CD8-positive, alpha-beta T cell (primary cell): ENCODE measurements at regions of chr13 and their contacts with region 1.

Region 1: GRCh38 chr13:27449936-27450828 is at the start of gene MTIF3:
- DNase-seq: peak; percentile 94 to 99 (median 98)
- ATAC-seq: peak; percentile 81
- H3K4me3 ChIP-seq: peak within 1 kb of the TSS; percentile 82 to 92
- H3K4me3 Mint-ChIP-seq: peak within 1 kb of the TSS; percentile 93
- H3K27ac ChIP-seq: peak within 1 kb of the TSS; percentile 90 to 97
- H3K27ac Mint-ChIP-seq: peak within 1 kb of the TSS; percentile 99
- H3K4me1 ChIP-seq: peaks cover 54% of the 10 kb centered on the region
- H3K4me1 Mint-ChIP-seq: peaks cover 57% of the 10 kb centered on the region
- H3K27me3 ChIP-seq: no peaks in the 10 kb centered on the region
- H3K27me3 Mint-ChIP-seq: no peaks in the 10 kb centered on the region
- CTCF ChIP-seq: no peak
- total RNA-seq, gene MTIF3: 12.7 to 13.0 TPM

Region 2: GRCh38 chr13:26221721-26222519 is 1228.3 kb before region 1 on chr13 and contains the start of gene RNF6:
- CTCF ChIA-PET with region 1: no interaction called
- POLR2A ChIA-PET with region 1: no interaction called
- intact Hi-C with region 1: loop called in 1 of 2 experiments (anchors 10 kb)
- DNase-seq: peak; percentile 73 to 97 (median 86)
- ATAC-seq: peak; percentile 92
- H3K4me3 ChIP-seq: peak within 1 kb of the TSS; percentile 97 to 99
- H3K4me3 Mint-ChIP-seq: peak within 1 kb of the TSS; percentile 99
- H3K27ac ChIP-seq: peak within 1 kb of the TSS; percentile 90 to 98
- H3K27ac Mint-ChIP-seq: peak within 1 kb of the TSS; percentile 100
- H3K4me1 ChIP-seq: peaks cover 26% of the 10 kb centered on the region
- H3K4me1 Mint-ChIP-seq: peaks cover 45% of the 10 kb centered on the region
- H3K27me3 ChIP-seq: no peaks in the 10 kb centered on the region
- H3K27me3 Mint-ChIP-seq: no peaks in the 10 kb centered on the region
- CTCF ChIP-seq: no peak
- total RNA-seq, gene RNF6: 50.3 to 55.0 TPM

Region 3: DNA sequence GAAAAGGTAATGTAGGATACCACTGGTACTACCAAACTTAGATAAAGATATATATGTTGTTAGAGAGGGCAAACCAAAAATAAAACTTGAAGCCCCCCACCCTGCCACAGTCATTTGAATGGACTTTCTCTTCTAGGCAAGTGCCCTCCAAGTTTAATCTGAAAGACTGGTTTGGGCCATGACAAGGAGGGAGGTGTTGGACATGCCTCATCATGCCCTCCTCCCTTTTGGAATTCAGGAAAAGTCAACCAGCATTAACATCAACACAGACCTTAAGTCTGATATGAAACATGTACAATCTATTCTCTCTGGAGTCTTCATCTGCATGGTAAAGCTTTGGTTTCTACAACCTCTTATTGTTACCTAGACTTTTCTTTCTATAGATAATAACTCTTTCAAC is 643.3 kb before region 1 on chr13:
- CTCF ChIA-PET with region 1: no interaction called
- POLR2A ChIA-PET with region 1: no interaction called
- intact Hi-C with region 1: no loop called
- DNase-seq: no peak
- ATAC-seq: no peak
- H3K4me3 ChIP-seq: no peak overlapping the region
- H3K4me3 Mint-ChIP-seq: no peak overlapping the region
- H3K27ac ChIP-seq: no peak overlapping the region
- H3K27ac Mint-ChIP-seq: no peak overlapping the region
- H3K4me1 ChIP-seq: no peaks in the 10 kb centered on the region
- H3K4me1 Mint-ChIP-seq: no peaks in the 10 kb centered on the region
- H3K27me3 ChIP-seq: no peaks in the 10 kb centered on the region
- H3K27me3 Mint-ChIP-seq: peaks cover 44% of the 10 kb centered on the region
- CTCF ChIP-seq: no peak

Region 4: GRCh38 chr13:27406178-27406939 is 43.8 kb before region 1 on chr13:
- CTCF ChIA-PET with region 1: interaction called, 5 read pairs
- POLR2A ChIA-PET with region 1: no interaction called
- intact Hi-C with region 1: loop called (anchors 1 to 5 kb)
- DNase-seq: peak in 7 of 9 experiments; percentile 18 to 77 (median 44)
- ATAC-seq: peak; percentile 56
- H3K4me3 ChIP-seq: no peak overlapping the region
- H3K4me3 Mint-ChIP-seq: no peak overlapping the region
- H3K27ac ChIP-seq: no peak overlapping the region
- H3K27ac Mint-ChIP-seq: no peak overlapping the region
- H3K4me1 ChIP-seq: no peaks in the 10 kb centered on the region
- H3K4me1 Mint-ChIP-seq: peaks cover 4% of the 10 kb centered on the region
- H3K27me3 ChIP-seq: no peaks in the 10 kb centered on the region
- H3K27me3 Mint-ChIP-seq: no peaks in the 10 kb centered on the region
- CTCF ChIP-seq: peak; percentile 54

Region 5: DNA sequence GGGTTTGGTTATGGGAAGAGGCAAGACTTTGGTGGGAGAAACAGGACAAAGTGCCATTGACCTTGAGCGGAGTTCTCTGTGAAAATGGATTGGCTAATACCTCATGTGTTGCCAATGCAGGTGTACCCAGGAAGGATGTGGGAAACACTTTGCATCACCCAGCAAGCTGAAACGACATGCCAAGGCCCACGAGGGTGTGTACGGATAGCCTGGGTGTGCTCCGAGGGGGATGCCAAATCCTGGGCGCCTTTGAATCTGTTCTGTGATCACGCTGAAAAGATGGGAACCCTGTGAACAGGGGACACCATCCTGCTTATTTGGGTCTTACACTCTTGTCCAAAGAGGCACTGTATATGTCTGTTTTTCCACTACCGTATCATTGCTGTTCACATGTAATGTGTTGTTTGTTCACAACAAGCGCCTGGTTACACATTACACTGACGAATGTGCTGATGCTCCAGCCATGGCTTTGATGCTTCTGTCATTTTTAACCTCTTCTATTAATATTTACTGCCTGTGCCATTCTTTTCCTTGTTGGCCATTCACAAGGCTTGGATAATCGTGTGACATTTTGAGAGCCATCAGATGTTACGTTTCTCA is 17.5 kb before region 1 on chr13:
- CTCF ChIA-PET with region 1: interaction called, 62 read pairs
- POLR2A ChIA-PET with region 1: interaction called, 171 read pairs
- intact Hi-C with region 1: loop called in 1 of 2 experiments (anchors 1 kb)
- DNase-seq: peak in 4 of 9 experiments; percentile 53 to 72 (median 60)
- ATAC-seq: peak; percentile 80
- H3K4me3 ChIP-seq: no peak overlapping the region
- H3K4me3 Mint-ChIP-seq: peak overlapping the region; percentile 33
- H3K27ac ChIP-seq: peak overlapping the region; percentile 27 to 57
- H3K27ac Mint-ChIP-seq: peak overlapping the region; percentile 90
- H3K4me1 ChIP-seq: peaks cover 41% of the 10 kb centered on the region
- H3K4me1 Mint-ChIP-seq: peaks cover 54% of the 10 kb centered on the region
- H3K27me3 ChIP-seq: no peaks in the 10 kb centered on the region
- H3K27me3 Mint-ChIP-seq: no peaks in the 10 kb centered on the region
- CTCF ChIP-seq: no peak

Region 6: DNA sequence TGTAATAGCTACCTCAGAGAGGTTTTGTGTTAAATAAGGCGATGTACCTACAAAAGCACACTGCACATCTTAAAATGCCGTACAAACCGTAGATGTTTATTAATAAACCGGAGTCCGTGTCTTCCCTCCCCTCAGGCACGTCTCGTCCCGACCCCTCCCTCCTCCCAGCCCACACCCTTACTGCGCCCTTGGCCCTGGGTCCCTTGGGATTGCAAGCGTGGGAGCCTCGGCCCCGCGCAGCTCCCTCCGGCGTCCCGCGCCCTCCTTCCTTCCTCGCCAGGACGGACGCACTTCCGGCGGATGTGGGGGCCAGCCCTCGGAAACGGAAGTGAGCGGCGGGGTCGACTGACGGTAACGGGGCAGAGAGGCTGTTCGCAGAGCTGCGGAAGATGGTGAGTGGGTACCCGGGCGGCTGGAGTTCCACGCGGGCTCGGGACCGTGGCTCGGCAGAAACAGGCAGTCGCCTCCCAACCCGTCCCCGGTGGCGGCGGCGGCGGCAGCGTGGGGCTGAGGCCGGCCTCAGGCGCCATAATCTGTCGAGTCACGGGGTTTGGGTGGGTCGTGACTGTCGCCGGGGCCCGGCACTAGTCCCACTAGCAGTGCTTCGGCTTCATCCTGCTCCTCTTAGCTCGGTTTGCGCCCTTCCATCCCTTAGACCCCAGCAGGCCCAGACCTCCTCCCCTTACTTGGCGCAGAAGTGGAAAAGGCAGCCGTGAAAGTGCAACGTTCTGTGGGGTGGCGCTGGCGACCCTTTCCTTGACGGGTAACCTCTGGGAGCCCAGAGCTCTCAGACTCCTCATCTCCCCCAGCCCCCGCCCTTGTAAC is 1208.8 kb after region 1 on chr13 and contains the start of gene POMP:
- CTCF ChIA-PET with region 1: no interaction called
- POLR2A ChIA-PET with region 1: no interaction called
- intact Hi-C with region 1: loop called (anchors 2 kb)
- DNase-seq: peak; percentile 79 to 95 (median 93)
- ATAC-seq: peak; percentile 77
- H3K4me3 ChIP-seq: peak within 1 kb of the TSS; percentile 72 to 73
- H3K4me3 Mint-ChIP-seq: peak within 1 kb of the TSS; percentile 98
- H3K27ac ChIP-seq: peak within 1 kb of the TSS; percentile 85 to 97
- H3K27ac Mint-ChIP-seq: peak within 1 kb of the TSS; percentile 99
- H3K4me1 ChIP-seq: peaks cover 33% of the 10 kb centered on the region
- H3K4me1 Mint-ChIP-seq: peaks cover 62% of the 10 kb centered on the region
- H3K27me3 ChIP-seq: no peaks in the 10 kb centered on the region
- H3K27me3 Mint-ChIP-seq: no peaks in the 10 kb centered on the region
- CTCF ChIP-seq: no peak
- total RNA-seq, gene POMP: 34.7 to 38.0 TPM